ENCODE measurements at regions of chr2 and their contacts with region 1.

Region 1: GRCh38 chr2:38750891-38751595 is at the start of gene SRSF7:
- DNase-seq: peak; percentile 97 to 99
- H3K4me3 ChIP-seq: peak within 1 kb of the TSS; percentile 90
- H3K4me3 Mint-ChIP-seq: peak within 1 kb of the TSS; percentile 99
- H3K27ac Mint-ChIP-seq: peak within 1 kb of the TSS; percentile 100
- H3K4me1 ChIP-seq: peaks cover 31% of the 10 kb centered on the region
- H3K4me1 Mint-ChIP-seq: peaks cover 50% of the 10 kb centered on the region
- H3K27me3 ChIP-seq: no peaks in the 10 kb centered on the region
- H3K27me3 Mint-ChIP-seq: peaks cover 3% of the 10 kb centered on the region
- CTCF ChIP-seq: no peak
- total RNA-seq, gene SRSF7: 224 and 233 TPM in 2 replicates

Region 2: DNA sequence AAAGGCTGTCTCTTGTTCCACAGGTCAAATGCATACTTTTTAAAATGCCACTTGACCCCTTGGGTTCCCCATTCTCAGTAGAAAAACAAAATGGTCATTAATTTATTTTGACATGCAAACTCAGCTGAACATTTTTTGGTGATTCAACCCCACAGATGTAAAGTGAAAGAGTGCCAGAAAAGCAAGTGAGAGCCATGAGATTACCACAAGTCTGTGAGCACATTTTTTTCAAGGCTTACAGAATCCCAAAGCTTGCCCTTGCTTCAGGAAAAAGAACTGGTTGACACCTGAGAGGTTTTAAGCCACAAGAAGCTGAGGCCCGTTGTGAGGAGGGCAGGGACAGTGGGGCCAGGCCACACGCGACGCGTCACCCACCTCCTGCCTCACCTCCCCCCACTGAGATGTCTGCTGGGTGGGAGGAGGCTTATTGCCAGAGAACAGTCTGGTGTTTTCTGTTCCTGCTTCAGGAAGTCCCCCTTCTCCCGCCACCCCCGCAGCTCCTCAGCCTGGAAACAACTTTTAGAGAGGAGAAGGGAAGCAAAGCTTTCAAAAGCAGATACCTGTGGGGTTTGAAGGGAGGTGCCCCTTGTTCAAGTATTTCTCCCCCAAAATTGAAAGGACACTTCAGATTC is 604.7 kb before region 1 on chr2:
- CTCF ChIA-PET with region 1: no interaction called
- POLR2A ChIA-PET with region 1: no interaction called
- intact Hi-C with region 1: no loop called
- DNase-seq: no peak
- H3K4me3 ChIP-seq: no peak overlapping the region
- H3K4me3 Mint-ChIP-seq: no peak overlapping the region
- H3K27ac Mint-ChIP-seq: peak overlapping the region; percentile 84
- H3K4me1 ChIP-seq: peaks cover 13% of the 10 kb centered on the region
- H3K4me1 Mint-ChIP-seq: peaks cover 8% of the 10 kb centered on the region
- H3K27me3 ChIP-seq: no peaks in the 10 kb centered on the region
- H3K27me3 Mint-ChIP-seq: no peaks in the 10 kb centered on the region
- CTCF ChIP-seq: no peak

Region 3: DNA sequence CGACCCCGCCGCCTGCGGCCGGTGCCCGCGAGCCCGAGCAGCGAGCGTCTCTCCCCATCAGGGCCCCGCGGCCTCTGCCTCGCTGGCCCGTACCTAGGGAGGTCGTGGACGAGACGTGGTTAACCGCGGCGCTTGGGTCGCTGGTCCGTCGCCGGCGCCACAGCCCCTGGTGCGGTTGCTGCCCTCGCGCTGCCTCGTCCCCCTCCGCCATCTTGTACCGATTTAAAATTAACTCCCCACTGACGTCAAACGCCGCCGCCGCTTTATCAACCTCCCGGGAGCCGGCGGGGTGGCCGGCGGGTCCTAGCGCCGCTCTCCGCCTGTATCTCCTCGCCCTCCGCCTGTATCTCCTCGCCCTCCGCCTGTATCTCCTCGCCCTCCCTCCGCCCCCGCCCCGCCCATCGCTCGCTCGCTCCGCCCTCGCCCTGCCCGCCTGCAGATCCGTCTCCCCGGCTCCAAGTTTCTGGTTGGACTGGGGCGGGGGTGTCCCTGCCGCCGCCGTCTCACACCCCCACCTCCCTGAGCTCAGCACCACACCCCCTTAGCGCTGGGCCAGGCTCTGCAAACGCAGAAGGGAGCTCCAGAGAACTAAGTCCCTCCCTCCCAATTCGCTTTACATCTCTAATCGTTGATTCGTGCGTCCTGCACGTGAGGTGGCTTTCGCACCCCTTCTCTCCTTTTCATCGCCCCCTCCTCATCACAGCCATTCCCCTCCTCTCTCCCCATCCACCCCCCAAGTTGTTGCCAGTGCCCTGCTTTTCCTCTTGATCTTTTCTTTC is 373.8 kb before region 1 on chr2 and contains the start of gene ATL2:
- CTCF ChIA-PET with region 1: interaction called, 3 read pairs
- POLR2A ChIA-PET with region 1: interaction called, 10 read pairs
- intact Hi-C with region 1: loop called (anchors 5 kb)
- DNase-seq: peak; percentile 96 to 98
- H3K4me3 ChIP-seq: peak within 1 kb of the TSS; percentile 48
- H3K4me3 Mint-ChIP-seq: peak within 1 kb of the TSS; percentile 80
- H3K27ac Mint-ChIP-seq: peak within 1 kb of the TSS; percentile 94
- H3K4me1 ChIP-seq: peaks cover 21% of the 10 kb centered on the region
- H3K4me1 Mint-ChIP-seq: peaks cover 35% of the 10 kb centered on the region
- H3K27me3 ChIP-seq: no peaks in the 10 kb centered on the region
- H3K27me3 Mint-ChIP-seq: no peaks in the 10 kb centered on the region
- CTCF ChIP-seq: no peak
- total RNA-seq, gene ATL2: 107 and 113 TPM in 2 replicates

Region 4: GRCh38 chr2:38474715-38475566 is 276.1 kb before region 1 on chr2:
- CTCF ChIA-PET with region 1: no interaction called
- POLR2A ChIA-PET with region 1: no interaction called
- intact Hi-C with region 1: no loop called
- DNase-seq: no peak
- H3K4me3 ChIP-seq: no peak overlapping the region
- H3K4me3 Mint-ChIP-seq: no peak overlapping the region
- H3K27ac Mint-ChIP-seq: no peak overlapping the region
- H3K4me1 ChIP-seq: no peaks in the 10 kb centered on the region
- H3K4me1 Mint-ChIP-seq: peaks cover 6% of the 10 kb centered on the region
- H3K27me3 ChIP-seq: no peaks in the 10 kb centered on the region
- H3K27me3 Mint-ChIP-seq: no peaks in the 10 kb centered on the region
- CTCF ChIP-seq: no peak

Region 5: GRCh38 chr2:38610851-38611801 is 139.9 kb before region 1 on chr2:
- CTCF ChIA-PET with region 1: interaction called, 3 read pairs
- POLR2A ChIA-PET with region 1: interaction called, 14 read pairs
- intact Hi-C with region 1: no loop called
- DNase-seq: peak; percentile 47 to 54
- H3K4me3 ChIP-seq: no peak overlapping the region
- H3K4me3 Mint-ChIP-seq: peak overlapping the region; percentile 37
- H3K27ac Mint-ChIP-seq: peak overlapping the region; percentile 63
- H3K4me1 ChIP-seq: peaks cover 19% of the 10 kb centered on the region
- H3K4me1 Mint-ChIP-seq: peaks cover 33% of the 10 kb centered on the region
- H3K27me3 ChIP-seq: no peaks in the 10 kb centered on the region
- H3K27me3 Mint-ChIP-seq: no peaks in the 10 kb centered on the region
- CTCF ChIP-seq: no peak

Region 6: GRCh38 chr2:38735999-38736320 is 15.1 kb before region 1 on chr2:
- CTCF ChIA-PET with region 1: no interaction called
- POLR2A ChIA-PET with region 1: interaction called, 13 read pairs
- intact Hi-C with region 1: no loop called
- DNase-seq: no peak
- H3K4me3 ChIP-seq: no peak overlapping the region
- H3K4me3 Mint-ChIP-seq: no peak overlapping the region
- H3K27ac Mint-ChIP-seq: peak overlapping the region; percentile 35
- H3K4me1 ChIP-seq: no peaks in the 10 kb centered on the region; the same call in 1 of the 2 replicates
- H3K4me1 Mint-ChIP-seq: no peaks in the 10 kb centered on the region
- H3K27me3 ChIP-seq: no peaks in the 10 kb centered on the region
- H3K27me3 Mint-ChIP-seq: no peaks in the 10 kb centered on the region
- CTCF ChIP-seq: no peak

Region 7: DNA sequence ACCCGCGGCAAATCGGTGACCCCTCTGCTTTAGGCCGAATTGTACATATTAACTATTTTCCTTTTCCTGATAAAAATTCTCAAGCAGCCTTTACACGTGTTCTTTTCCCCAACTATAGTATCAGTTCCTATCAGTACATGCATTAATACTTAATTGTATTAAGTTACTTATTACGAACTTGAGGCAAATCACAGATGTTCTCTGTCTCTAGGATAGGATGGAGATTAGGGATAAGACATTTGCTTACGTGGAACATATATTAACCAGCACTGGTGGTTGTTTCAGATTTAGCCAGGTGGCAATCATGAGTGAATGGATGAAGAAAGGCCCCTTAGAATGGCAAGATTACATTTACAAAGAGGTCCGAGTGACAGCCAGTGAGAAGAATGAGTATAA is 27.6 kb after region 1 on chr2:
- CTCF ChIA-PET with region 1: no interaction called
- POLR2A ChIA-PET with region 1: interaction called, 46 read pairs
- intact Hi-C with region 1: loop called (anchors 1 kb)
- DNase-seq: no peak
- H3K4me3 ChIP-seq: peak overlapping the region; percentile 73
- H3K4me3 Mint-ChIP-seq: peak overlapping the region; percentile 99
- H3K27ac Mint-ChIP-seq: peak overlapping the region; percentile 94
- H3K4me1 ChIP-seq: peaks cover 6% of the 10 kb centered on the region; the same call in 1 of the 2 replicates
- H3K4me1 Mint-ChIP-seq: peaks cover 13% of the 10 kb centered on the region
- H3K27me3 ChIP-seq: no peaks in the 10 kb centered on the region
- H3K27me3 Mint-ChIP-seq: no peaks in the 10 kb centered on the region
- CTCF ChIP-seq: no peak

Region 8: DNA sequence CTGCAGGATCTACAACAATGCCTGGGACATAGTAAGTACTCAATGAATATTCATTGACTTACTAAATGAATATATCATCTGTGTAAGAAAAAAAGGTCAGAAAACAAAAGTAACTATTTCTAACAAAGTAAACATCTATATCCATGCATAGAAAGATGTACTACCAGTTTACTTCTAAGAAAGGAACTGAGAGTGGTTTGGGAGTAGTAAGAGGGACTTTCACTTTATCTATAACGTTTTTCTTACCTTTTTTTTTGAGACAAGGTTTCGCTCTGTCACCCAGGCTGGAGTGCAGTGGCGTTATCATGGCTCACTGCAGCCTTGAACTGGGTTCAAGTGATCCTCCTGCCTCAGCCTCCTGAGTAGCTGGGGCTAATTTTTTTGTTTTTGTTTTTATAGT is 99.0 kb after region 1 on chr2:
- CTCF ChIA-PET with region 1: no interaction called
- POLR2A ChIA-PET with region 1: interaction called, 17 read pairs
- intact Hi-C with region 1: no loop called
- DNase-seq: no peak
- H3K4me3 ChIP-seq: no peak overlapping the region
- H3K4me3 Mint-ChIP-seq: no peak overlapping the region
- H3K27ac Mint-ChIP-seq: no peak overlapping the region
- H3K4me1 ChIP-seq: no peaks in the 10 kb centered on the region
- H3K4me1 Mint-ChIP-seq: no peaks in the 10 kb centered on the region
- H3K27me3 ChIP-seq: no peaks in the 10 kb centered on the region
- H3K27me3 Mint-ChIP-seq: no peaks in the 10 kb centered on the region
- CTCF ChIP-seq: no peak